Lower leg skin (tissue), 4 donors: ENCODE measurements at regions of chr2 and their contacts with region 1.

Region 1: DNA sequence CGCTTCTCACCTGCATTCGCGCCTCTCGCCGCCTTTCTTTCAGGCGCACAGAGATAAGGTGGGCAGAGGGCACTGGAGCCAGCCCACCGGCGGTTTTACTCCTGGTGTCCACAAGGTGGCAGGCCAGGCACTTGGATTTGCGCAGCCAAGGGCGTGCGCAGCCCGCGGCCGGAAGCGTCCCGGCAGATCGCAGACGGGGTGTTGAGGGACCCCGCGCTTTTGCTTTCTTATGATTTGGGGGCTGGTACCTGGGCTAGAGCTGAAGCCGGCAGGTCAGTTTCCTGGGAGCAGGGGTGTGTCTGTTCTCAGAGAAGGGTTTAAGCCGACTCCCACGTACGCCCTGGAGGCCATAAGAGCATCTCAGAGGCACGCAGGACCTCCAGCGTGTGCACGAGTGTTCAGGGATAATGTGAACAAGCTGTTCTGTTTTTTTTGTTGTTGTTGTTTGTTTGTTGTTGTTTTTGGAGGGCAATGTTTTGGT is 305.6 kb upstream of the CXCR4 start:
- DNase-seq: peak; percentile 46 to 88
- H3K4me3 ChIP-seq: no peak overlapping the region
- CTCF ChIP-seq: peak in 1 of 3 donors; percentile 14
- POLR2A ChIP-seq: no peak

Region 2: DNA sequence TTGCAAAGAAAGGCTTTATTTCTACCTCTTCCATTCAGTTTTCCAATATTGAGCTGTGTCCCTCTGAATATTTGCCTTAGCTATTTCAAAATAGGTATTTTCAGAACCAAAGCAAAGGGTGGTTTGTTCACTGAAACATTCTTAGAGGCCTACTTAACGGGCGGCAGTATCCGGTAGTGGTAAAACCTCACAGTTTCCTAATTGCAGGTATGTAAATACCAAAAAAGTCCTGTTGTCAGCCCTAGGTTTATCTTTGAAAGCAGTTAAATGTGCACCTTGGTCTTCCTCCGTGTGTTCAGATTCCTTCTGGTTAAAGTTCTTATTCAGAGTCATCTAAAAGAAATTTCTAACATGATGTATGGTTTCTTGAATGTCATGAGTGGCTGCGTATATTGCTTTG is 1466.1 kb before region 1 on chr2:
- intact Hi-C with region 1: no loop called
- DNase-seq: no peak
- H3K4me3 ChIP-seq: no peak overlapping the region
- CTCF ChIP-seq: no peak
- POLR2A ChIP-seq: no peak

Region 3: GRCh38 chr2:135617501-135618015 is 806.0 kb before region 1 on chr2:
- intact Hi-C with region 1: no loop called
- DNase-seq: no peak
- H3K4me3 ChIP-seq: no peak overlapping the region
- CTCF ChIP-seq: no peak
- POLR2A ChIP-seq: no peak

Region 4: DNA sequence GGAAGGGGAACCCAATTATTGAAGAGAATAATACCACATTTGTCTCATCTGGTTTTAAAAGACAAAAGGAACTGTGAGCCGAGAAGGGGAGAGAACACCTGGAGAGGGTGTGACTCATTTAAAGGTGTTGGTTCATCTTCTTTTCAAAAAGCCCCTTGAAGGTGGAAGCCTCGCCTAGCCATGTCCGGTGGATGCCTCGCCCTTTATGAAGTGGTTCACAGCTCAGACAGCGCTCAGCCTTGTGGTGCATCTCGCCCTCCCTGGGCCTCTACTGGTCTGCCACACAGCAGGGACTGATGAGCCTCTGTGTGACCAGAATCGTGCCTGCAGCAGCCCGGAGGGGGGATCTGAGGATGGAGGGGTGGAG is 15.6 kb before region 1 on chr2:
- intact Hi-C with region 1: no loop called
- DNase-seq: no peak
- H3K4me3 ChIP-seq: no peak overlapping the region
- CTCF ChIP-seq: no peak
- POLR2A ChIP-seq: no peak

Region 5: GRCh38 chr2:137659612-137660011 is 1236.1 kb after region 1 on chr2:
- intact Hi-C with region 1: loop called (anchors 10 kb)
- DNase-seq: no peak
- H3K4me3 ChIP-seq: no peak overlapping the region
- CTCF ChIP-seq: no peak
- POLR2A ChIP-seq: no peak

Region 6: DNA sequence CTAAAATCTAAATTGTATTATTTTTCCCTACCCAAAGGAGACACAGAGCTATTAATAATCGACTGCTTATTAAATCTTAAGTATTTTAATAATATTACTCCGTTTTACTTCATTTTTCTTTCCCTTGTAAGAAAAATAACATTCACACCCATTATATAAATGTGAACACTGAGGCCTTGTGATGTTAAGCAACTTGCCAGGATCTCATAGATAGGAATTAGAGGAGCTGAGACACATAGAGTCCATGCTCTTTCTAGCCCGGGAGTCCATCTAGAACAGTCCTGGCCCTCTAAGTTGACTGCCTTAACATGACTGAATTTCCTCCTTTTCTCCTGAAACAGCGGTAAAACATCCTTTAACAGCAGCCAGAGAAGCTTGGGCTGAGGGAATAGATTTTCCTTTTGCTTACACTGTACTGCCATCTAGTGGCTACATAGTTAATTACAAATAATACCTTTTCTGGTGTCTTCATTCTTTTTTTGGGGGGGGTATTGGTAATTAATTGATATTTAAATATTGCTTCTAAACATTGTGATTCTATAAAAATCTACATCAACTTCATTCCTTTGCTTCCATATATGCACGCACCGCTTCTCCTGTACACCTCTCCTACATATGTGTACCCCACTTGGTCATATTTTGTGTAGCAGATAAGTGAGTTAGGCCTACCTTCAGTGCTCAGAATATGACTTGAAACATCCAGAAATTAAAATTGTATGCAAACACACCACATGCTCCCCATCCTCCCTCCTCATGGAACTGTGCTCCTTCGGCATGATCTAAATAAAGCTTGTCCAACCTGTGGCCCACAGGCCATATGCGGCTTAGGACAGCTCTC is 1414.9 kb after region 1 on chr2:
- intact Hi-C with region 1: loop called (anchors 5 kb)
- DNase-seq: no peak
- H3K4me3 ChIP-seq: no peak overlapping the region
- CTCF ChIP-seq: no peak
- POLR2A ChIP-seq: no peak